ENCODE measurements at regions of chr10 and their contacts with region 1.

Region 1: DNA sequence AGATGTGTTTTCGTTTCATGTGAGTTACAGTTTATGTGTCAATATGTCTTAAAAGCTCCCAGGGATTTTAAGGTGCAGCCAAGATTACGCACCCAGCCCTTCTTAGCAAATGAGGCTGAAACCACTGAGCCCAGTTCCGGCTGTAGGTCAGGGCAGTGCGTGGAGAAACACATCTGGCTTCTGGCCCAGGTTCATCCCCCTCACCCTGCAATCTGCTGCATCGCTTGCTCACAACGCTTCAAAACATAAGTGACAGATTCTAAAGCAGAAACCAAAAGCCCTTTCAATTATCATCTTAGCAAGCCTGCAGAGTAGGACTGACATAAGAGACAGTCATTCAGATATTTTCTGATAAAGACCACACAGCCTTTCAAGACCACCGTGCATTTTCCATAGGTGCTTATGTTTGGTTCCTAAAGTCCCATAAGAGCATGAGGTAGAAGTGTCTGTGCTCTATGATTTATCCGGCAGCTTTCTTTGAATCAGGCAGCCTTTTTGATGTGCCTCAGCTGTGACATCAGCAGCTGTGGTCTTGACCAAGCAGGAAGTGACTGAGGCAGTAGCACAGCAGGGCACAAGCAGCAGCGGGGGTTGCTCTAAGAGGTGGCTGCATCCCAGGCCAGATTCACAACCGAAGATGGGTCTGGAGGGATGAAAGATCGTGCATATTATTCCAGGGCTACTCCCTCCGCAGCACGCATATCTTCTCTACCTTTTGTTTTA is 72.1 kb upstream of the LYZL2 start:
- DNase-seq: peak; percentile 41 to 87 (median 62)
- ATAC-seq: peak; percentile 65
- H3K4me3 ChIP-seq: peak overlapping the region; percentile 43
- H3K4me3 Mint-ChIP-seq: peak overlapping the region; percentile 85
- H3K27ac ChIP-seq: peak overlapping the region; percentile 51 to 74
- H3K27ac Mint-ChIP-seq: peak overlapping the region; percentile 99
- H3K4me1 ChIP-seq: peaks cover 81% of the 10 kb centered on the region
- H3K4me1 Mint-ChIP-seq: peaks cover 87% of the 10 kb centered on the region
- H3K27me3 ChIP-seq: no peaks in the 10 kb centered on the region
- H3K27me3 Mint-ChIP-seq: no peaks in the 10 kb centered on the region
- CTCF ChIP-seq: no peak

Region 2: GRCh38 chr10:30591249-30591670 is 110.4 kb before region 1 on chr10:
- CTCF ChIA-PET with region 1: no interaction called
- POLR2A ChIA-PET with region 1: no interaction called
- intact Hi-C with region 1: no loop called
- DNase-seq: peak in 13 of 14 experiments; percentile 8 to 82 (median 20)
- ATAC-seq: peak; percentile 74
- H3K4me3 ChIP-seq: no peak overlapping the region
- H3K4me3 Mint-ChIP-seq: no peak overlapping the region
- H3K27ac ChIP-seq: no peak overlapping the region
- H3K27ac Mint-ChIP-seq: no peak overlapping the region
- H3K4me1 ChIP-seq: peaks cover 3% of the 10 kb centered on the region
- H3K4me1 Mint-ChIP-seq: no peaks in the 10 kb centered on the region
- H3K27me3 ChIP-seq: no peaks in the 10 kb centered on the region
- H3K27me3 Mint-ChIP-seq: no peaks in the 10 kb centered on the region
- CTCF ChIP-seq: peak; percentile 90

Region 3: DNA sequence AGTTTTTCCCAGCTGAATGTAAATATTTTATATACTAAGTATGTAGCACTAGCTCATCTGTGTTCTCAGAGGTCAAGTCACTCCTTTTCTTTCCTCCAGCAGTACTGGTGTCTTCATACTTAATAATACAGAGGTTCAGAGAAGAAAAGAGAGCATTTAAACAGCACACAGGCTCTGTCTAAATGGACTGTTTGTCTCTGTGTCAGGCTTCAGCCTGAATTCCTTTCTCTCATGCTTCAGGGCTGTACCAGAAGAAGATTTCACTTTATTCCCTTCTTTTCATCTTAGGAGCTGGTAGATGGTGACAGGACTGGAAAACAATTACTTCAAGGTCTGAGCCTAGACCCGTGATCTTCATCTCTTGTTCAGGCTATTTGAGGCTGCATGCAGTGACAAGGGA is 20.7 kb before region 1 on chr10:
- CTCF ChIA-PET with region 1: no interaction called
- POLR2A ChIA-PET with region 1: no interaction called
- intact Hi-C with region 1: no loop called
- DNase-seq: no peak
- ATAC-seq: no peak
- H3K4me3 ChIP-seq: no peak overlapping the region
- H3K4me3 Mint-ChIP-seq: no peak overlapping the region
- H3K27ac ChIP-seq: no peak overlapping the region
- H3K27ac Mint-ChIP-seq: no peak overlapping the region
- H3K4me1 ChIP-seq: peaks cover 2% of the 10 kb centered on the region
- H3K4me1 Mint-ChIP-seq: no peaks in the 10 kb centered on the region
- H3K27me3 ChIP-seq: peaks cover 4 to 17% of the 10 kb centered on the region in 2 experiments
- H3K27me3 Mint-ChIP-seq: peaks cover 49% of the 10 kb centered on the region
- CTCF ChIP-seq: no peak

Region 4: DNA sequence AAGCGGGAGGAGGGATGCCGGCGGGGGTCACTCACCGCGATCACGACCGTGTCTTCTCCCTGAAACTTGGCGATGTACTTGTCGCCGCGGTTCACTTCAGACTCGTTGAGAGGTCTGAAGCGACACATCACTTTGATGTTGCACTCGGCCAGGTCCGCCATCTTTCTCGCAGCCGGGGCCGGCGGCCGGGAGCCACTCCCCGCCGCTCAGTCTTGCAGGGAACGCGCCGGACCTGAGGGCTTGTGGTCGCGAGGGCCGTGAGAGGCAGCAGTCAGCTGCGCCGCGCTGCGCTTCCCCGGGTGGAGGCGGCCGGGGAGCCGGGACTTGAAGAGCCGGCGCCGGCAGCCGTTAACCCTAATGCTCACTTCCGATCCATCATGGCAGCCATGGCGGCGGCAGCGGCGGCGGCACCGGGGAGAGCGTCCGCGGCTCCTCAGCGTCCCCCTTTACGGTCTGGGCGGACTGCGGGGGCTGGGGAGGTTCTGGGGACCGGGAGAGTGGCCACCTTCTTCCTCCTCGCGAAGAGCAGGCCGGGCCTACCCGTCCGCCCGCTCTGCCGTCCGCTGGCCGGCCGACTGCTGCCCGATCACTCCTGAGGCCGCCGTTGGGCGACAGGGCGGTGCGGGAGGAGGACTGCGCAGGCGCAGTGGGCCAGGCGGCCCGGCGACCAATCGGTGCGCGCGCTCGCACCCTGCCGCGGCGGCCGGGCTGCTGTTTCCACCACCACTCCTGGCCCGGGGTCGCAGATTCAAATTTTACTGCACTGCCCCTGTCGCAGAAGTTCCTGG is 1354.4 kb after region 1 on chr10 and contains the start of gene KIF5B:
- CTCF ChIA-PET with region 1: no interaction called
- POLR2A ChIA-PET with region 1: no interaction called
- intact Hi-C with region 1: loop called in 1 of 2 experiments (anchors 5 kb)
- DNase-seq: peak; percentile 74 to 95 (median 84)
- ATAC-seq: peak; percentile 79
- H3K4me3 ChIP-seq: peak within 1 kb of the TSS; percentile 98
- H3K4me3 Mint-ChIP-seq: peak within 1 kb of the TSS; percentile 95
- H3K27ac ChIP-seq: peak within 1 kb of the TSS; percentile 77 to 92
- H3K27ac Mint-ChIP-seq: peak within 1 kb of the TSS; percentile 95
- H3K4me1 ChIP-seq: peaks cover 18% of the 10 kb centered on the region
- H3K4me1 Mint-ChIP-seq: peaks cover 54% of the 10 kb centered on the region
- H3K27me3 ChIP-seq: no peaks in the 10 kb centered on the region
- H3K27me3 Mint-ChIP-seq: no peaks in the 10 kb centered on the region
- CTCF ChIP-seq: no peak
- total RNA-seq, gene KIF5B: 58.3 to 59.0 TPM

Measured in CD4-positive, alpha-beta T cell (primary cell).